Endothelial cell of umbilical vein (primary cell): ENCODE measurements at regions of chr6 and their contacts with region 1.

Region 1: GRCh38 chr6:108835218-108835850 is 12.9 kb upstream of the ARMC2 start:
- DNase-seq: peak; percentile 82
- H3K4me3 ChIP-seq: no peak overlapping the region
- H3K27ac ChIP-seq: no peak overlapping the region
- H3K4me1 ChIP-seq: no peaks in the 10 kb centered on the region
- H3K27me3 ChIP-seq: peaks cover 0 to 10% of the 10 kb centered on the region in 2 experiments
- CTCF ChIP-seq: peak; percentile 80 to 95
- POLR2A ChIP-seq: no peak

Region 2: DNA sequence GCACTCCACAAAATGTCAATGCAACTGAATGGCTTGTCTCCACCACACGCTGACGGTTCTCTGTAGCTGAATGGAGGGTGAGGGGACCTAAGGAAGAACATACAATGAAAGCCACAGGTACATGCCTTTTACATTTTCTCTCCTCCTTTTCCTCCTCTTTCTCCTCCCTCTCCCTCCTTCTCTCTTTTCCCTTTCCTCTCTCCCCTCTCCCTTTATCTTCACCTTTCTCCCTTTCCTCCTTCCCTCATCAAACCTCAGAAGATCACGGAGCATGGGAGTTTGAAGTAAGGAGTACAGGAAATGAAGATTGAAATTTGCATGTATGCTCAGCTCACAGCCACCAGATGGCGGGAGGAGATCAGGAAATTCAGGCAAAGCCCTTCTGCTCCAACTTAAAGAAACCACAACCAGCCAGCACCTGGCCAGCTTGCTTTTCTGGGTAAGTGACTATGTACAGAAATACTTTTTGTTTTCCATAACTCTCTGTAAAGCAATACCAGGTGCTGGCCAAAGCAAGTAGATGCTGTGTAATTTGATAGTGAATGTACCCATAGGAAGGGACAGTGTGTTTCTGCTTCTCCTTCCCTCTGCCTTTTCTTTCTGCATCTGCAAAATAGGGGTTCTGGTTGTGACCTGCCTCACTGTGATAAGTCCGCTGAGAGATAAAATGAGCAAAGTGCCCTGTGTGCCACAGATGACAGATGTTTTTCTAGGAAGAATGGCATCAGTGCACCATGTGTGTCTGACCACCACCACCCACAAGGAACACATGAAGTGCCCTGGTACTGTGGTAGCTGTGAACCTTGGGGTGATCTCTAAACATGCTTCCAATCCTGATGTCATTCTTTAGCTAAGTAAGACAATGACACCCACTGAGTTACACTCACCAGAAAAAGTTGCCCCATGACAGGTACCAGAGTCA is 293.2 kb before region 1 on chr6:
- CTCF ChIA-PET with region 1: interaction called, 63 read pairs
- POLR2A ChIA-PET with region 1: no interaction called
- dilution Hi-C with region 1: no loop called
- intact Hi-C with region 1: loop called (anchors 1 kb)
- DNase-seq: peak; percentile 83
- H3K4me3 ChIP-seq: no peak overlapping the region
- H3K27ac ChIP-seq: no peak overlapping the region
- H3K4me1 ChIP-seq: no peaks in the 10 kb centered on the region
- H3K27me3 ChIP-seq: peaks cover 0 to 8% of the 10 kb centered on the region in 2 experiments
- CTCF ChIP-seq: peak; percentile 71 to 80
- POLR2A ChIP-seq: no peak

Region 3: GRCh38 chr6:108737594-108738546 is 97.5 kb before region 1 on chr6:
- CTCF ChIA-PET with region 1: no interaction called
- POLR2A ChIA-PET with region 1: no interaction called
- dilution Hi-C with region 1: no loop called
- intact Hi-C with region 1: loop called (anchors 2 kb)
- DNase-seq: peak; percentile 82
- H3K4me3 ChIP-seq: no peak overlapping the region
- H3K27ac ChIP-seq: peak overlapping the region; percentile 62
- H3K4me1 ChIP-seq: peaks cover 40% of the 10 kb centered on the region
- H3K27me3 ChIP-seq: no peaks in the 10 kb centered on the region
- CTCF ChIP-seq: no peak
- POLR2A ChIP-seq: no peak

Region 4: DNA sequence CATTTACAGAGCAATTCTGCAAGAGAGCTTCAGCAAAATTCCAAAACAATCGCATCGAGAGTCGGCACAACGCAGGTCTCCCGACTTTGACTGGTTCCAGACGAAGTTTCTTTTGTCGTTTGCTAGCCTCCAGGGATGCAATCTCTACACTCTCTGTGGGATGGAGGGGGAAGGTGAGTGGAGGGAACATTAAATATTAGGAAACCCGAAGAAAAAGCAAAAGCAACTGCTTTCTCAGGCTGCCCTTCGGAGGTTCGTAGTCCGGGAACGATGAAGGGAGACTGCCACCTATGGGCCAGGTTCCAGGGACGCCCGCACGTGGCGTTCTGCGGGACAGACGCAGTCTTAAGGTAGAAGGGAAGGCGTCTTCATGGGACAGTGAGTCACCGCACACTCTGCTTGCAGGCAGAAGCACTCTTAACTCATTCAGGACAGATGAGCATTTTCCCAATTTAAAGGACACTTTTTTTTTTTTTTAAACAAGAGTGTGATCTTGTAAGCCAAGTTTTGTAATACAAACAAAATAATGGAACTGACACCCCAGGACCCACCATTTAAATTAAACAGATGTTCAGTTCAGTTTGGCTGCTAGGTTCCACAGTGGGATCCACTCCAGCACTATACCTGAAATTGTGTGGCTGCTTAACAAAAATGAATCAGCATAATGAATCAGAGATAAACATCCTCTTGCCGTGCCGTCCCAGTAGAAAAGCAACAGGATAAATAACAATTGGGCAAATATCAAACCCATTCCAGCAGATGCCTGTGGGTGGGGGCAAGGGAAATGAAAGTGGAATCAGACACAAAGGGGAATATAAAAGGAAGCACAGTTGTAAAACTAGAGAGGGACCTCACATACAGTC is 52.9 kb before region 1 on chr6:
- CTCF ChIA-PET with region 1: interaction called, 5 read pairs
- POLR2A ChIA-PET with region 1: no interaction called
- dilution Hi-C with region 1: no loop called
- intact Hi-C with region 1: loop called (anchors 1 kb)
- DNase-seq: peak; percentile 88
- H3K4me3 ChIP-seq: peak overlapping the region; percentile 56 to 79 (median 60)
- H3K27ac ChIP-seq: no peak overlapping the region
- H3K4me1 ChIP-seq: peaks cover 18% of the 10 kb centered on the region
- H3K27me3 ChIP-seq: no peaks in the 10 kb centered on the region
- CTCF ChIP-seq: peak; percentile 72 to 85
- POLR2A ChIP-seq: no peak

Region 5: DNA sequence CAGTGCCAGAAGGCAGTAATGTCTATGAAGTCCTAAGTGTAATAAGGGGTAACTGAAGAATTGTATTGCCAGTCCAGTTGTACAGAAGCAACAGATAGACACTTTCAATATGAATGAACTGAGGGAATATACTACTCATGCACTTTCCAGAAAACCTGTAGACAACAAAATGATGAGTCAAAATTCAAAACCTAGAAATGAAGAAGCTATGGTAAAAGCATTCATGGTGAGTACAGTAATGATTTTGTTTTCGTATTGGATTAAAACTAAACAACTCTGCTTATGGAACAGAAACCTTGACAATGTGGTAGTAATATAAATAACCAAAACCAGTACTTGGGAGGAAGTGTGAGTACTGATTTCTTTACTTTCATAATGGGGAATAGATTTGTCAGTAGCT is 47.8 kb after region 1 on chr6:
- CTCF ChIA-PET with region 1: no interaction called
- POLR2A ChIA-PET with region 1: no interaction called
- dilution Hi-C with region 1: no loop called
- intact Hi-C with region 1: no loop called
- DNase-seq: no peak
- H3K4me3 ChIP-seq: no peak overlapping the region
- H3K27ac ChIP-seq: no peak overlapping the region
- H3K4me1 ChIP-seq: no peaks in the 10 kb centered on the region
- H3K27me3 ChIP-seq: no peaks in the 10 kb centered on the region
- CTCF ChIP-seq: no peak
- POLR2A ChIP-seq: no peak

Region 6: GRCh38 chr6:108988296-108988695 is 153.0 kb after region 1 on chr6:
- CTCF ChIA-PET with region 1: no interaction called
- POLR2A ChIA-PET with region 1: no interaction called
- dilution Hi-C with region 1: no loop called
- intact Hi-C with region 1: loop called (anchors 5 kb)
- DNase-seq: no peak
- H3K4me3 ChIP-seq: no peak overlapping the region
- H3K27ac ChIP-seq: no peak overlapping the region
- H3K4me1 ChIP-seq: no peaks in the 10 kb centered on the region
- H3K27me3 ChIP-seq: no peaks in the 10 kb centered on the region
- CTCF ChIP-seq: no peak
- POLR2A ChIP-seq: no peak

Region 7: GRCh38 chr6:109073344-109074132 is 238.2 kb after region 1 on chr6:
- CTCF ChIA-PET with region 1: interaction called, 10 read pairs
- POLR2A ChIA-PET with region 1: no interaction called
- dilution Hi-C with region 1: no loop called
- intact Hi-C with region 1: loop called (anchors 1 kb)
- DNase-seq: peak; percentile 77
- H3K4me3 ChIP-seq: no peak overlapping the region
- H3K27ac ChIP-seq: no peak overlapping the region
- H3K4me1 ChIP-seq: peaks cover 5% of the 10 kb centered on the region
- H3K27me3 ChIP-seq: no peaks in the 10 kb centered on the region
- CTCF ChIP-seq: peak; percentile 32 to 55
- POLR2A ChIP-seq: no peak